PC-9 (cell line): ENCODE measurements at regions of chr2 and their contacts with region 1.

Region 1: GRCh38 chr2:171143670-171144062 is 17.0 kb downstream of the TLK1 start:
- DNase-seq: no peak
- H3K4me3 ChIP-seq: no peak overlapping the region
- H3K27ac ChIP-seq: no peak overlapping the region
- H3K4me1 ChIP-seq: peaks cover 18% of the 10 kb centered on the region
- H3K27me3 ChIP-seq: no peaks in the 10 kb centered on the region
- CTCF ChIP-seq: no peak

Region 2: GRCh38 chr2:170950221-170950761 is 193.4 kb before region 1 on chr2:
- CTCF ChIA-PET with region 1: interaction called, 11 read pairs
- POLR2A ChIA-PET with region 1: no interaction called
- intact Hi-C with region 1: no loop called
- DNase-seq: no peak
- H3K4me3 ChIP-seq: no peak overlapping the region
- H3K27ac ChIP-seq: no peak overlapping the region
- H3K4me1 ChIP-seq: no peaks in the 10 kb centered on the region
- H3K27me3 ChIP-seq: no peaks in the 10 kb centered on the region
- CTCF ChIP-seq: no peak